Activated naive CD4-positive, alpha-beta T cell treated with anti-CD3 and anti-CD28 coated beads for 36 hours (primary cell): ENCODE measurements at regions of chr15 and their contacts with region 1.

Region 1: DNA sequence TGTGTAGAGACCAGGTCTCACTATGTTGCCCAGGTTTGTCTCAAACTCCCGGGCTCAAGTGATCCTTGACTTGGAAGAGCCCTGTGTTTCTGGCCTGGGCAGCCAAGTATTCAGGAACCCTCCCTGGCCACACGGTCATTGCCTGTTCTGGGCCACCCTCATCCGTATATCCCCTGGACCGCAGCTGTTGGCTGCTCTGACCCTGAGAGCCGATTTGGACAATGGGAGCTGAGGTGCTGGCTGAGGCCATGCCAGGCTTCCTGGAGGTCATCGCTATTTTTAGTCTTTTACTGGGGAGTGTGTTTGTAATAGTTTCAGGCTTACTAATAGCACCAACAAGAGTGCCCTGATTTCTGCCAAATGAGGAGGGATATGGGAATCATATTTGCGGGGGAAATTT is 60.7 kb downstream of the ADAMTS7 start:
- DNase-seq: peak; percentile 1
- H3K4me3 Mint-ChIP-seq: peak overlapping the region; percentile 51
- H3K27ac Mint-ChIP-seq: no peak overlapping the region
- H3K4me1 Mint-ChIP-seq: peaks cover 5% of the 10 kb centered on the region
- H3K27me3 Mint-ChIP-seq: no peaks in the 10 kb centered on the region

Region 2: DNA sequence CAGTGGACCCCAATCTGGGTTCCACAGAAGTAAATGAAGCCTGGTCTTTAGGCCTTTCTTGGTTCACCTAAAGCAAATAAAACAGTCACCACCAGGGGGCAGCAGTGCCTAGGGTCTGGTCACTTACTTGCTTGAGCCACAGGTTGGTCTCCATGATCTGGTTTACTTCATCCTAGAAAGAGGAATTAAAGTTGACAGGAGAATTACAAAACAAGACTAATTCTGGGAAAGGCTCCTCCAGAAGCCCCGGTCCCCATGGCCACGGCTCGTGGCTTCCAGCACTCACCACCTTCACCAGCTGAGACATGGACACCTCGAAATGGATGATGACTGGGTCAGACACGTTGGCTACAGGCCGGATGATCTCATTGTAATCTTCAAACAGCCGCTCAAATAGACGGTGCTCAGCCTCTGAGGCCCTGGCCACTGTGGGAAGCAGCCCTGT is 132.1 kb before region 1 on chr15:
- CTCF ChIA-PET with region 1: interaction called, 11 read pairs
- intact Hi-C with region 1: loop called (anchors 1 kb)
- DNase-seq: peak; percentile 92
- H3K4me3 Mint-ChIP-seq: no peak overlapping the region
- H3K27ac Mint-ChIP-seq: no peak overlapping the region
- H3K4me1 Mint-ChIP-seq: peaks cover 12% of the 10 kb centered on the region
- H3K27me3 Mint-ChIP-seq: peaks cover 36% of the 10 kb centered on the region

Region 3: DNA sequence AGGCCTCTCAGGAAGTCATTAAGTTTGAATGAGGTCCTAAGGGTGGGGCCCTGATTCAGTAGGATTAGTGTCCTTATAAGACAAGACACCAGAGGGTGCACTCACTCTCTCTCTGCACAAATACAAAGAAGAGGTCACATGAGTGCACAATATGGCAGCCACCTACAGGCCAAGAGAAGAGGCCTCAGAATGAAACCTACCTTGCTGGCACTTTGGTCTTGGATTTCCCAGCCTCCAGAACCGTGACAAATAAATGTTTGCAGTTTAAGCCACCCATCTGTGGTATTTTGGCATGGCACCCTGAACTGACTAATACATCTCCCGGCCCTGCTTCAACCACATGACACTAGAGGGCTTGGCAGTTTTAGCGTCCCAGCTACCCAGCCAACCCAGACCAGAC is 35.7 kb before region 1 on chr15:
- CTCF ChIA-PET with region 1: interaction called, 4 read pairs
- intact Hi-C with region 1: loop called (anchors 1 kb)
- DNase-seq: peak; percentile 38
- H3K4me3 Mint-ChIP-seq: no peak overlapping the region
- H3K27ac Mint-ChIP-seq: peak overlapping the region; percentile 22
- H3K4me1 Mint-ChIP-seq: peaks cover 6% of the 10 kb centered on the region
- H3K27me3 Mint-ChIP-seq: peaks cover 16% of the 10 kb centered on the region

Region 4: GRCh38 chr15:78739996-78740903 is 10.3 kb before region 1 on chr15:
- CTCF ChIA-PET with region 1: interaction called, 17 read pairs
- intact Hi-C with region 1: no loop called
- DNase-seq: peak; percentile 79
- H3K4me3 Mint-ChIP-seq: no peak overlapping the region
- H3K27ac Mint-ChIP-seq: no peak overlapping the region
- H3K4me1 Mint-ChIP-seq: peaks cover 2% of the 10 kb centered on the region
- H3K27me3 Mint-ChIP-seq: peaks cover 2% of the 10 kb centered on the region